ENCODE measurements at regions of chr4 and their contacts with region 1.

Region 1: GRCh38 chr4:83793481-83793880 is 257.6 kb downstream of the GPAT3 start:
- DNase-seq: no peak

Region 2: GRCh38 chr4:82063017-82063416 is 1730.5 kb before region 1 on chr4:
- intact Hi-C with region 1: loop called in 1 of 2 experiments (anchors 5 kb)
- DNase-seq: no peak

Measured in posterior vena cava (tissue), 2 donors.